ENCODE measurements at regions of chr3 and their contacts with region 1.

Region 1: GRCh38 chr3:184513276-184514170 is 48.1 kb upstream of the EPHB3 start:
- DNase-seq: no peak
- H3K4me3 ChIP-seq: peak overlapping the region; percentile 6
- H3K27me3 ChIP-seq: peaks cover 30% of the 10 kb centered on the region
- CTCF ChIP-seq: peak; percentile 90

Region 2: GRCh38 chr3:184371570-184372018 is 141.9 kb before region 1 on chr3:
- CTCF ChIA-PET with region 1: interaction called, 95 read pairs
- POLR2A ChIA-PET with region 1: no interaction called
- DNase-seq: peak; percentile 36
- H3K4me3 ChIP-seq: no peak overlapping the region
- H3K27me3 ChIP-seq: no peaks in the 10 kb centered on the region; the same call in 1 of the 2 replicates
- CTCF ChIP-seq: peak; percentile 99

Region 3: DNA sequence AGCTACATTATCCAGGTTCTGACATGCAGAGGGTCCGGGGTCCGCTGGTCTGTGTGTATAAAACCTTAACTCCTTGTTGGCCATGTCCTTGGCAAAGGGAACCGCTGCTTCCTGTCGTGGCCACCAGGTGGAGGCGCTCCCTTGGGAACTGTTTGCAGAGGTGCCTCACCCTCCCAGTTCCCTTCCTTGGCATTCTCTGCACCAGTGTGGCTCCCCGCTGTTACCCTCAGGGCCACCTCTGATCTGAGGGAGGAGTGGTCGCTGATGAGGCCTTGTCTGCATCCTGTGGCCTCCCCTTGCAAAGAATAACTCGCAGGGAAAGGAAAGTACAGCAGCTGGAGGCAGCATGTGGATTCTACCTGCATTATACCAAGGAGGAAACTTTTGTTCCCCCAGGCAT is 44.1 kb before region 1 on chr3:
- CTCF ChIA-PET with region 1: interaction called, 45 read pairs
- POLR2A ChIA-PET with region 1: no interaction called
- DNase-seq: no peak
- H3K4me3 ChIP-seq: no peak overlapping the region
- H3K27me3 ChIP-seq: peaks cover 2% of the 10 kb centered on the region; the same call in 1 of the 2 replicates
- CTCF ChIP-seq: peak; percentile 69

Region 4: GRCh38 chr3:184491867-184492615 is 21.5 kb before region 1 on chr3:
- CTCF ChIA-PET with region 1: interaction called, 11 read pairs
- POLR2A ChIA-PET with region 1: no interaction called
- DNase-seq: no peak
- H3K4me3 ChIP-seq: no peak overlapping the region
- H3K27me3 ChIP-seq: peaks cover 32% of the 10 kb centered on the region
- CTCF ChIP-seq: no peak

Region 5: GRCh38 chr3:184523825-184524615 is 10.5 kb after region 1 on chr3:
- CTCF ChIA-PET with region 1: interaction called, 53 read pairs
- POLR2A ChIA-PET with region 1: no interaction called
- DNase-seq: no peak
- H3K4me3 ChIP-seq: no peak overlapping the region
- H3K27me3 ChIP-seq: peaks cover 10% of the 10 kb centered on the region
- CTCF ChIP-seq: no peak

Region 6: DNA sequence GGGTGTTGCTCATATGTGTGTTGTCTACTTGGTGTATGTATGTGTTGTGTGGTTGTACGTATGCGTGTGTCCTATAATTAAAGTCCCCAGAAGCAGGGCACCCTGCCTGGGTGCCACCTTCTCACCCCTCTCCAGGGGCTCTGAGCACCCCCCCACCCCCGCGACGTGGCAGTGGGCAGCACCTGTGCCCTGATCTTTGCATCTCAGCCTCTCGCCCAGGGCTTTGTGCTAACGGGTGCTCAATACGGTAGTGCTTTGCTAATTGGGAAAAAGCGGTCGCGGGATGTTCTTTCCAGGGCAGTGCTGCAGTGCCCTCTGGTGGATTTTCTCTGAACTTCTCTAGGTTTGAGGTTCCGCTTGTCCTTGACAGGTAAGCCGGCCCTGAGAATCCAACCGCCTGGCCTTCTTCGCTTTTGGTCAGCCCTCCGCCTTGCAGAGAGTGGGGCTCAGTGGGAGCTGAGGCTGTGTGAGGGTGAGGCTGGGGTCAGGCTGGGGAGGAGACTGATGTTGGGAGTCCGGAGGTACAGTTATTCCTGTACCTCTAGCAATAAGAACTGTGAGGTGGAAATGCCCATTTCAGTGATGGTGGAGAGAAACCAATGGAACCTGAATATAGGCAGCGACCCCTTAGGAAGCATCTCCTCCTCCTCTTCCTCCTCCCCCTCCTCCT is 30.5 kb after region 1 on chr3:
- CTCF ChIA-PET with region 1: interaction called, 22 read pairs
- POLR2A ChIA-PET with region 1: no interaction called
- DNase-seq: no peak
- H3K4me3 ChIP-seq: no peak overlapping the region
- H3K27me3 ChIP-seq: peaks cover 11% of the 10 kb centered on the region
- CTCF ChIP-seq: peak; percentile 80

Region 7: GRCh38 chr3:184765730-184766074 is 252.2 kb after region 1 on chr3:
- CTCF ChIA-PET with region 1: no interaction called
- POLR2A ChIA-PET with region 1: no interaction called
- DNase-seq: no peak
- H3K4me3 ChIP-seq: no peak overlapping the region
- H3K27me3 ChIP-seq: peaks cover 5% of the 10 kb centered on the region
- CTCF ChIP-seq: no peak

Measured in BJ (cell line).